ENCODE measurements at regions of chr3 and their contacts with region 1.

Region 1: GRCh38 chr3:101685870-101686412 is 577 bp downstream of the RPL24 start:
- DNase-seq: no peak
- ATAC-seq: peak; percentile 7; the same call in 1 of the 2 replicates
- H3K4me3 ChIP-seq: peak overlapping the region; percentile 89
- H3K27ac ChIP-seq: peak overlapping the region; percentile 69
- H3K4me1 ChIP-seq: peaks cover 27% of the 10 kb centered on the region
- H3K27me3 ChIP-seq: no peaks in the 10 kb centered on the region
- CTCF ChIP-seq: no peak

Region 2: DNA sequence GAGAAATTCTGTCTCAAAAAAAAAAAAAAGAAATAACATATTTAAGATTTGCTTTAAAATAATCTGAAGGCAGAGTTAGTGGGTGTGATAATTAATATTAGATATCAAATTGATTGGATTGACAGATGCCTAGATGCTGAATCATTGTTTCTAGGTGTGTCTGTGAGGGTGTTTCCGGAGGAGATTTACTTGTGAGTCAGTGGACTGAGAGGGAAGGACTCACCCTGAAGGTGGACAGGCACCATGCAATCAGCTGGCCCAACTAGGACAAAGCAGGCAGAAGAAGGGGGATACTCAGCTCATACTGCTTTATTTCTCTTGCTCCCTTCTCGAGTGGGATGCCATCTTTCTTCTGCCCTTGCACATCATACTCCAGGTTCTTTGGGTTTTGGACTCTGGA is 17.2 kb after region 1 on chr3:
- CTCF ChIA-PET with region 1: interaction called, 6 read pairs
- POLR2A ChIA-PET with region 1: interaction called, 16 read pairs
- intact Hi-C with region 1: loop called (anchors 1 kb)
- DNase-seq: peak; percentile 82
- ATAC-seq: peak; percentile 96
- H3K4me3 ChIP-seq: no peak overlapping the region
- H3K27ac ChIP-seq: peak overlapping the region; percentile 76
- H3K4me1 ChIP-seq: peaks cover 17% of the 10 kb centered on the region
- H3K27me3 ChIP-seq: no peaks in the 10 kb centered on the region
- CTCF ChIP-seq: no peak

Region 3: GRCh38 chr3:101724329-101725193 is 38.6 kb after region 1 on chr3 and contains the start of gene CEP97:
- CTCF ChIA-PET with region 1: no interaction called
- POLR2A ChIA-PET with region 1: no interaction called
- intact Hi-C with region 1: loop called (anchors 5 kb)
- DNase-seq: peak; percentile 96
- ATAC-seq: peak; percentile 98
- H3K4me3 ChIP-seq: peak within 1 kb of the TSS; percentile 87
- H3K27ac ChIP-seq: peak within 1 kb of the TSS; percentile 17; the same call in 1 of the 2 replicates
- H3K4me1 ChIP-seq: peaks cover 19% of the 10 kb centered on the region
- H3K27me3 ChIP-seq: no peaks in the 10 kb centered on the region
- CTCF ChIP-seq: no peak
- total RNA-seq, gene CEP97: 12.1 and 14.1 TPM in 2 replicates